ENCODE measurements at regions of chr3 and their contacts with region 1.

Region 1: DNA sequence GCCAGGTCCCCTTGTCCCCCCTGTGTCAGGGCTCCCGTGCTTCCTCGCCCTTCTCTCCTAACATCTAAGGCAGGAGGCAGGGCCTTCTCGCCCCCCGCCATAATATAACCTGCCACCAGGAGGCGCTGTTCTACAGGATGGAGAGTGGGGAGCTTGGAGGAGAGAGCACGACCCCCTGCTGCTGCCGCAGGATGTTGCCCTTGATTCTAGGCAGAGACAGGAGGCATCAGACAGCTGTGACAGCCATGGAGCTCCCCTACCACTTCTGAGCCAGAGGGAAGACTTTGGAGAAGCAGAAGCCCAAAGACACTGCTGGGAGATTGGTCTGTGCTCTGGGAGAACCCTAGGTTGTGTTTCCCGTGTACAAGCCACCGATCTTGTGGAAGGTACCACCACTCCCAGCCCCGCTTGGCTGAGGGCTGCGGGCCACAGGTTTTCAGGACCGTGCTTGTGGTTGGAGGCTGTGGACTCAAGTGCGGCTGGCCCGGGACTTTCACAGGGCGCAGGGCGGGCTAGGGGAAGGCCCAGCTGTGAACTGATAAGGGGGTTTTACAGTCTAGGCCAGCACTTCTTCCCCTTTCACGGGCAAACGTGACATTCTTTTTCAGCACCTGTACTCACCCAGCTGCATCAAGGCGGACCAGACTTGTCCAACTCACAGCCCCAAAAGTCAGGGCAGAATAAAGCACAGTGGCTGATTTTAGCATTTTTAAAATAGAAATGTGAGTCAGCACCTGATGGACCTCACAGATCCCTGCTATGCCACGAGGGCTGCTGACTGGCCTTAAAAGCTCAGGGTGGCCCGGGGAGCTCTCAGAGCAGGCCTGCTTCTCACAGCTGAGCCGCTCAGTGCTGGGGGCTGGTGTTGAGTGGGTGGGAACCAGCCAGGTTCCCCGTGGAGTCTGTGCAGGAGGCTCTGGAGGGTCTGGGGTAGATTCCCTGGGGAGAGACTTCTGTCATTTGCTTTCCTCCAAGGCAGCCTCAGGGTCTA is 2.6 kb upstream of the TIGIT start:
- DNase-seq: peak in 4 of 10 donors; percentile 9 to 36 (median 26)
- H3K4me3 ChIP-seq: no peak overlapping the region
- H3K27ac ChIP-seq: no peak overlapping the region
- H3K27me3 ChIP-seq: peaks cover 0 to 4% (median 0%) of the 10 kb centered on the region in 45 donors
- CTCF ChIP-seq: peak; percentile 29 to 74 (median 62)

Region 2: GRCh38 chr3:115120597-115120996 is 829.4 kb after region 1 on chr3:
- intact Hi-C with region 1: loop called in 1 of 2 experiments (anchors 10 kb)
- DNase-seq: no peak
- H3K4me3 ChIP-seq: no peak overlapping the region
- H3K27ac ChIP-seq: no peak overlapping the region
- H3K27me3 ChIP-seq: no peaks in the 10 kb centered on the region
- CTCF ChIP-seq: no peak

Measured in dorsolateral prefrontal cortex (tissue), 120 donors.